ENCODE measurements at regions of chr6 and their contacts with region 1.

Region 1: DNA sequence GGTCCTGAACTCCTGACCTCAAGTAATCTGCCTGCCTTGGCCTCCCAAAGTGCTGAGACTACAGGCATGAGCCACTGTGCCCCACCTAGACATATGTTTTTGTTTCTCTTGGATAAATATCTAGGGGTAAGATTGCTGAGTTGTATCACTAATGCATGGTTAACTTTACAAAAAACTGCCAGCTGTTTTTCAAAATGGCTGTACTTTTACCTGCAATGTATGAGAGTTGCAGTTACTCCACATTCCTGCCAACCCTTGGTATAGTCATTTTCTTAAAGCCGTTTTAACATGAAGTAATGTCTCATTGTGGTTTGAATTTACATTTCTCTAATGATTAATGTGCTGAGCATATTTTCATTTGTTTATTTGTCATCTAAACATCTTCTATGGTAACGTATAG is 289.7 kb downstream of the UTRN start:
- DNase-seq: no peak
- H3K4me3 ChIP-seq: no peak overlapping the region
- CTCF ChIP-seq: no peak
- POLR2A ChIP-seq: no peak

Region 2: DNA sequence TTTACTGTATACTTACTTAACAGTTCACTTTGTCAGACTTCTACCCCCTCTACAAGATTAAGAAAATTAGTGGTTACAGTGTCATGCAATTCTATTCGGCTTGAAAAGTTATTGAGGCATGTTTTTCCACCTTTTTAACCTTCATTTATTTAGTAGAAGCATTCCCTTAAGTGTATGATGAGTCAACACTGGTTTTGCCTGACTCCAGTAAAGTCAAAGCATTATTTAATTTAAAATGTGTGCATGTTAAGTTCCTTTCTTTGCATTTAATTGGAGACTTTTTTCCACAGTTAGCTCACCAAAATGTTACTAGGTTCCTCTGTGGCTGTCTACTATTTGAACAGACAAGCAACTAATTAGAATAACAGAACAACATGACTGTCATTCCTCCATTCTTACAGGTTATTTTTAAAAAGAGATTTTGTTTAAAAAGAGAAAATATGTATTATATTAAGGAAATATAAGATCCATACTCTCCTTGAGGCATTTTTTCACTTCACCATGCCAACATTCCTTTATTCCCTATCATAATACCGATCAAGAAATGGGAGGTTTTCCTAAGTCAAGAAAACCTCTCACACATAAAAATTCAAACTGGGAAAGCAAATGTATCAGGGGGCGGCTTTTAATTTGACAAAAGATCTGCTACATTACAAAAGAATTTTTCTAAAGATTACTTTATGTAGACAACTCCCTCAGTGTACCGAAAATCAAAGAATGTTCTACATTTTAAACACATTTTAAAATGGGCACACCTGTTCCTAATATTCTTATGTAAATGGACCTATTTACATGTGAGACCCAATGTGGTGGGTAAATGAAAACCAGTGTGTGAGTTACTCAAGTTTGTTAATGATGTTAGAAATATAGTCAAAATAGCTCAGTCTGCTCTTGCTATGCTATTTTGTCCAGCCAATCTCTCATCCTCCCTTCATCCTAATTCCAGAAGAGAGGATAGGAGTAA is 71.6 kb after region 1 on chr6:
- intact Hi-C with region 1: no loop called
- DNase-seq: no peak
- H3K4me3 ChIP-seq: no peak overlapping the region
- CTCF ChIP-seq: no peak
- POLR2A ChIP-seq: no peak

Region 3: DNA sequence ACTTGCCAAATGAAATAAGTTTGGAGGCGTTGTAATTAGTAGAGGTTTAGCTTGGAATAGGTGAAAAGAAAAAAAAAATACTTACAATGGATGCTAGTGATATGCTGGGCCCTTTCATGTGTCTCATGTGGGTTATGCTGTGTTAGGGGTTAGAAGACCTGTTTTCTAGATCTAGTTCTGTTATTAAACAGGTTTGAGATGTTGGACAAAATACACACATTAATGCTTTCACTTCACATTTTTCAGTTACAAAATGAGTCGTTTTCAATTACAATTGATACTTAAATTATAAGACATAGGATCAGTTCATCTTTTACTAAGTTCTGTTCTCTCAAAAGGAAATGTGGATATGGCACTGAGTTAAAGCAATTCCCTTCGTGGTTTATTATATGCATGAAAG is 650.7 kb after region 1 on chr6:
- intact Hi-C with region 1: loop called (anchors 5 kb)
- DNase-seq: no peak
- H3K4me3 ChIP-seq: no peak overlapping the region
- CTCF ChIP-seq: no peak
- POLR2A ChIP-seq: no peak